HepG2 (cell line): ENCODE measurements at regions of chr5 and their contacts with region 1.

Region 1: DNA sequence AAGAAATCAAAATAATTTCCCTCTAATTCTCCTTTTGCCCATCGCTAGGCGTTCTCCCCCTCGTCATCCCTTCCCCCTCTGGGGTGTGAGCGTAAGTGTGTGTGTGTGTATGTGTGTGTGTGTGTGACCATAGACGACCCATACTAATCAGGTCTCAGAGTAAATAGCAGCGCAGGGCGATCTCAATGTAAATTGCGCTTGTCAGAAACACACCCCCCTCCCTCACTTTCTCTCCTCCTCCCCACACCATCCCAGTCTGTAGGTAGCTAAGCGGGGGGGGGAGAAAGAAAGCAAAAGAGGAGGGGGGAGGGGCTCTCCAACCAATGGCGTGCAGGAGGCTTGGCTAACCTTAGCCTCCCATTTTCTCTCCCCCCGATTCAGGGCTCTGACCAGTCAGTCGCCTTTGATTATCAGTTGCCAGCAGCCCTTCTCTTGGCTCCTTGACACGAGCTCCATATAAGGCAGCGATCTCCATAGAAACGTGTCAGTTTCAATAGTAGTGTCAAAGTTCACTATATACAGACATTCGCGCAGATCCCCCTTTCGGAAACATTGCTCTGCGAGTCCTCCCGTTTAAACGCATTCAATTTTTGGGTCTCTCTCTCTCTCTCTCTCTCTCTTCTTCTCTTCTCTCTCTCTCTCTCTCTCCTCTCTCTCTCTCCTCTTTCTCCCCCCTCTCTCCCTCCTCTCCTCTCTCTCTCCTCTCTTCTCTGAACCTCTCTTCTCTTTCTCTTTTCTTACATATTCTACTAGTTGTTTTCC is at the start of gene NR2F1:
- DNase-seq: peak; percentile 99
- ATAC-seq: peak; percentile 77
- H3K4me3 ChIP-seq: peak within 1 kb of the TSS; percentile 90 to 96 (median 95)
- H3K27ac ChIP-seq: peak within 1 kb of the TSS; percentile 92
- H3K4me1 ChIP-seq: peaks cover 26% of the 10 kb centered on the region
- H3K27me3 ChIP-seq: peaks cover 3 to 22% of the 10 kb centered on the region in 2 experiments; a peak in 3 of 5 replicates
- CTCF ChIP-seq: no peak
- EP300 ChIP-seq: peak; percentile 36 to 47; a peak in 1 of 4 replicates
- POLR2A ChIP-seq: peak in 1 of 2 experiments; percentile 96; a peak in 2 of 4 replicates
- RAD21 ChIP-seq: no peak
- total RNA-seq, gene NR2F1: 14.0 and 17.1 TPM in 2 replicates

Region 2: DNA sequence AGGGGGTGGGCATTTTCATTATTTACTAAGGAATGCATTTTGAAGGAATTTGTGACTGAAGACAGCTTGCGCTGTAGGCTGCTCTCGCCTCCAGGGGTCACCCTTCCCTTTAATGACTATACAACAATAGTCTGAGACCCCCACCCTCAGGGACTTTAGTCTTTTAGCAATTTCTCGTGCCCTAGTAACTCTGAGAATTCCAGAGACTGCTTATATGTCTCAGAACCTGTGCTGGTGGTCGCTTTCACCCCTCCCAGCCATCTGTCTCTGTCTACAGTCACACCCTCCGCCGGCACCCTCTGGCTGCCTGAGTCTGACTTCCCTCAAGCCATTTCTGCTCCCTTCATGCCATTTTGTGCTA is 673.3 kb before region 1 on chr5:
- CTCF ChIA-PET with region 1: no interaction called
- POLR2A ChIA-PET with region 1: interaction called, 13 read pairs
- in situ Hi-C with region 1: no loop called
- intact Hi-C with region 1: no loop called
- DNase-seq: peak; percentile 41
- ATAC-seq: peak; percentile 79
- H3K4me3 ChIP-seq: no peak overlapping the region
- H3K27ac ChIP-seq: peak overlapping the region; percentile 39
- H3K4me1 ChIP-seq: peaks cover 72% of the 10 kb centered on the region
- H3K27me3 ChIP-seq: no peaks in the 10 kb centered on the region
- CTCF ChIP-seq: peak; percentile 64
- EP300 ChIP-seq: 0 out of 4 replicates have a peak, but pooled peaks of 1 of the 2 experiments have one; percentile 12
- POLR2A ChIP-seq: no peak
- RAD21 ChIP-seq: peak; percentile 77

Region 3: GRCh38 chr5:93078082-93079038 is 504.5 kb before region 1 on chr5:
- CTCF ChIA-PET with region 1: no interaction called
- POLR2A ChIA-PET with region 1: no interaction called
- in situ Hi-C with region 1: no loop called
- intact Hi-C with region 1: loop called (anchors 1 kb)
- DNase-seq: peak; percentile 98
- ATAC-seq: peak; percentile 99
- H3K4me3 ChIP-seq: peak overlapping the region in 1 of 3 experiments; percentile 13; a peak in 1 of 6 replicates
- H3K27ac ChIP-seq: peak overlapping the region; percentile 76
- H3K4me1 ChIP-seq: peaks cover 37% of the 10 kb centered on the region
- H3K27me3 ChIP-seq: no peaks in the 10 kb centered on the region
- CTCF ChIP-seq: peak; percentile 28; the same call in 1 of the 2 replicates
- EP300 ChIP-seq: peak; percentile 68 to 85; a peak in 2 of 4 replicates
- POLR2A ChIP-seq: peak in 1 of 2 experiments; percentile 60; a peak in 2 of 4 replicates
- RAD21 ChIP-seq: no peak; the same call in 1 of the 2 replicates

Region 4: GRCh38 chr5:93532370-93532769 is 50.5 kb before region 1 on chr5:
- CTCF ChIA-PET with region 1: no interaction called
- POLR2A ChIA-PET with region 1: no interaction called
- in situ Hi-C with region 1: no loop called
- intact Hi-C with region 1: no loop called
- DNase-seq: peak; percentile 2
- ATAC-seq: peak; percentile 59
- H3K4me3 ChIP-seq: no peak overlapping the region
- H3K27ac ChIP-seq: no peak overlapping the region
- H3K4me1 ChIP-seq: no peaks in the 10 kb centered on the region
- H3K27me3 ChIP-seq: no peaks in the 10 kb centered on the region; a peak in 1 of 5 replicates
- CTCF ChIP-seq: no peak
- EP300 ChIP-seq: no peak
- POLR2A ChIP-seq: no peak
- RAD21 ChIP-seq: no peak

Region 5: DNA sequence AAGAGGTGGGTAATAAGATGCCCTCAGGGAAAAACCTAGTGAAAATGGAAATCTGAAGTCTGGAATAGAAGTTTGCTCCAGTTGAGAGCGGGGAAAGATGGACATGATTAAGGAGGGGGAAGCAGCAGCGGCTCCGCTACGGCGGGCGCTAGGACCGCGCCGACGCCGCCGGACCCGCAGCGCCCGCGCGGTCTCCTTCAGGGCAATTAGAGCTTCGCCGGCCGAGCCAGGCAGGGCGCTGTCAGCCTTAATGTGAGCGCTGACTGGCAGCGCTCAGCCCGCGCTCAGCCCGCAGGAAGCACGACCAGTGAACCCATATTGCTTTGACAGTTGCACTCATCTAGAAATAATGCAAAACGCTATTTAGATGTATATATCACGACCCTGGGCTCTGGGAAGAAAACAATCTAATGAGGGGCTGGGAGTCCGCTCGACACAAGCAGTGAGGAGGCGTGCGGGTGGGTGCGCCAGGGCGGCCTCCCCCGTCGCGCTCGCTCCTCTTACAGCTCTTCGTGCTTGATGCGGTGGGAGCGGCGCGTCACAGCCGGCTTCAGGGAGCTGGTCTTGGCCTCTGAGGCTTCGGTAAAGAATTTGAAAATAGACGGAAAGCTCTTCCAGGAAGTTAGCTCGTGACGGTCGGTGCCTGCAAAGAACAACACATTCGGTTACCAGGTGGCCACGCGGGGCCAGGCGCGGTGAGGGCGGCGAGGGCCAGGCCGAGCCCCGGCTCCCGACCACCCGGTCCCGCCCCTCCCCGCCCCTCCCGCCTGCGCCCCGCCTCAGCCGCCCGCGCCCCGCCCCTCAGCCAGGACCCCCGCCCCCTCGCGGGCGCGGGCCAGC is 37.8 kb after region 1 on chr5:
- CTCF ChIA-PET with region 1: no interaction called
- POLR2A ChIA-PET with region 1: interaction called, 3 read pairs
- in situ Hi-C with region 1: no loop called
- intact Hi-C with region 1: loop called (anchors 1 kb)
- DNase-seq: peak; percentile 50
- ATAC-seq: peak; percentile 97
- H3K4me3 ChIP-seq: peak overlapping the region; percentile 55 to 81 (median 80)
- H3K27ac ChIP-seq: peak overlapping the region; percentile 59
- H3K4me1 ChIP-seq: peaks cover 6% of the 10 kb centered on the region
- H3K27me3 ChIP-seq: no peaks in the 10 kb centered on the region
- CTCF ChIP-seq: peak; percentile 56
- EP300 ChIP-seq: no peak
- POLR2A ChIP-seq: no peak
- RAD21 ChIP-seq: peak; percentile 44

Region 6: GRCh38 chr5:93800988-93801811 is 218.3 kb after region 1 on chr5:
- CTCF ChIA-PET with region 1: interaction called, 19 read pairs
- POLR2A ChIA-PET with region 1: no interaction called
- in situ Hi-C with region 1: no loop called
- intact Hi-C with region 1: loop called (anchors 2 kb)
- DNase-seq: peak; percentile 45
- ATAC-seq: peak; percentile 54
- H3K4me3 ChIP-seq: no peak overlapping the region
- H3K27ac ChIP-seq: no peak overlapping the region
- H3K4me1 ChIP-seq: peaks cover 5% of the 10 kb centered on the region
- H3K27me3 ChIP-seq: no peaks in the 10 kb centered on the region
- CTCF ChIP-seq: peak; percentile 61
- EP300 ChIP-seq: no peak
- POLR2A ChIP-seq: no peak
- RAD21 ChIP-seq: peak; percentile 37; the same call in 1 of the 2 replicates

Region 7: GRCh38 chr5:94025788-94026475 is 443.1 kb after region 1 on chr5:
- CTCF ChIA-PET with region 1: no interaction called
- POLR2A ChIA-PET with region 1: no interaction called
- in situ Hi-C with region 1: no loop called
- intact Hi-C with region 1: loop called (anchors 5 kb)
- DNase-seq: peak; percentile 62
- ATAC-seq: peak; percentile 99
- H3K4me3 ChIP-seq: no peak overlapping the region
- H3K27ac ChIP-seq: no peak overlapping the region
- H3K4me1 ChIP-seq: peaks cover 20% of the 10 kb centered on the region
- H3K27me3 ChIP-seq: no peaks in the 10 kb centered on the region
- CTCF ChIP-seq: peak; percentile 75
- EP300 ChIP-seq: no peak
- POLR2A ChIP-seq: no peak
- RAD21 ChIP-seq: peak; percentile 68; the same call in 1 of the 2 replicates